GM12878 (cell line): ENCODE measurements at regions of chr7 and their contacts with region 1.

Region 1: DNA sequence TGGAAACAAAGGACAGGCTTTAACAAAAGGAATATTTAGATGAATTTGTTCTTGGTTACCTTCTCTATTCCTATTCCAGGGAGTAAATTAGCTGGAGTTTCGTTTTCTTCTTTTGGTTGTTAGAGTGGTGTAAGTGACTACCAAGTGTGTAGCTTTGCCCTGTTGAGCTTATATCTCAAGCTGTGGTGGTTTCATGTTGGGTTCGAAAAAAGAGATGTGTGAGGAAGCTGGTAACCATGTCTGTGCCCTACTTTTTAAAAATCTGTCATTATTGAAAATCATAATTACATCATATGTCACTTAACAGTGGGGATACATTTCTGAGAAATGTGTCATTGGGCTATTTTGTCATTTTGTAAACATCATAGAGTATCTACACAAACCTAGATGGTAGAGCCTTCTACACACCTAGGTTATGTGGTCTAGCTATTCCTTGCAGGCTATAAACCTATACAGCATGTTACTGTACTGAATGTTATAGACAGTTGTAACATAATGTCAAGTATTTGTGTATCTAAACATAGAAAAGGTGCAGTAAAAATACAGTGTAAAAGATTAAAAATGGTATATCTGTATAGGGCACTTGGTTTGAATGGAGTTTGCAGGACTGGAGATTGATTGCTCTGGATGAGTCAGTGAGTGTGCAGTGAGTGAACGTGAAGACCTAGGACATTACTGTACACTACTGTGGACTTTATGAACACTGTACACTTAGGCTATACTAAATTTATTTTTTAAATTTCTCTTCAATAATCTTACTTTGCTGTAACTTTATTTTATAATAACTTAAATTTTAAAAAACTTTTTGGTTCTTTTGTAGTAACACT is 90.4 kb downstream of the SEPTIN7 start:
- DNase-seq: no peak
- ATAC-seq: no peak
- H3K4me3 ChIP-seq: no peak overlapping the region
- H3K27ac ChIP-seq: no peak overlapping the region
- H3K4me1 ChIP-seq: no peaks in the 10 kb centered on the region
- H3K27me3 ChIP-seq: no peaks in the 10 kb centered on the region
- CTCF ChIP-seq: no peak
- EP300 ChIP-seq: no peak
- POLR2A ChIP-seq: no peak
- RAD21 ChIP-seq: no peak

Region 2: GRCh38 chr7:35878351-35878750 is 12.9 kb before region 1 on chr7:
- CTCF ChIA-PET with region 1: interaction called, 5 read pairs
- POLR2A ChIA-PET with region 1: interaction called, 3 read pairs
- RAD21 ChIA-PET with region 1: no interaction called
- SMC1A ChIA-PET with region 1: interaction called, 11 read pairs
- in situ Hi-C with region 1: no loop called
- intact Hi-C with region 1: no loop called
- DNase-seq: no peak
- ATAC-seq: no peak
- H3K4me3 ChIP-seq: no peak overlapping the region
- H3K27ac ChIP-seq: no peak overlapping the region
- H3K4me1 ChIP-seq: no peaks in the 10 kb centered on the region
- H3K27me3 ChIP-seq: no peaks in the 10 kb centered on the region
- CTCF ChIP-seq: no peak
- EP300 ChIP-seq: no peak
- POLR2A ChIP-seq: no peak
- RAD21 ChIP-seq: no peak

Region 3: GRCh38 chr7:36115448-36116321 is 224.5 kb after region 1 on chr7:
- CTCF ChIA-PET with region 1: no interaction called
- POLR2A ChIA-PET with region 1: no interaction called
- RAD21 ChIA-PET with region 1: no interaction called
- SMC1A ChIA-PET with region 1: no interaction called
- in situ Hi-C with region 1: no loop called
- intact Hi-C with region 1: no loop called
- DNase-seq: peak; percentile 79
- ATAC-seq: peak; percentile 100
- H3K4me3 ChIP-seq: no peak overlapping the region
- H3K27ac ChIP-seq: no peak overlapping the region
- H3K4me1 ChIP-seq: peaks cover 11% of the 10 kb centered on the region
- H3K27me3 ChIP-seq: peaks cover 0 to 6% of the 10 kb centered on the region in 2 experiments; a peak in 3 of 4 replicates
- CTCF ChIP-seq: no peak
- EP300 ChIP-seq: peak; percentile 44 to 93; a peak in 3 of 4 replicates
- POLR2A ChIP-seq: no peak
- RAD21 ChIP-seq: no peak